GM10248 (cell line): ENCODE measurements at regions of chr5 and their contacts with region 1.

Region 1: DNA sequence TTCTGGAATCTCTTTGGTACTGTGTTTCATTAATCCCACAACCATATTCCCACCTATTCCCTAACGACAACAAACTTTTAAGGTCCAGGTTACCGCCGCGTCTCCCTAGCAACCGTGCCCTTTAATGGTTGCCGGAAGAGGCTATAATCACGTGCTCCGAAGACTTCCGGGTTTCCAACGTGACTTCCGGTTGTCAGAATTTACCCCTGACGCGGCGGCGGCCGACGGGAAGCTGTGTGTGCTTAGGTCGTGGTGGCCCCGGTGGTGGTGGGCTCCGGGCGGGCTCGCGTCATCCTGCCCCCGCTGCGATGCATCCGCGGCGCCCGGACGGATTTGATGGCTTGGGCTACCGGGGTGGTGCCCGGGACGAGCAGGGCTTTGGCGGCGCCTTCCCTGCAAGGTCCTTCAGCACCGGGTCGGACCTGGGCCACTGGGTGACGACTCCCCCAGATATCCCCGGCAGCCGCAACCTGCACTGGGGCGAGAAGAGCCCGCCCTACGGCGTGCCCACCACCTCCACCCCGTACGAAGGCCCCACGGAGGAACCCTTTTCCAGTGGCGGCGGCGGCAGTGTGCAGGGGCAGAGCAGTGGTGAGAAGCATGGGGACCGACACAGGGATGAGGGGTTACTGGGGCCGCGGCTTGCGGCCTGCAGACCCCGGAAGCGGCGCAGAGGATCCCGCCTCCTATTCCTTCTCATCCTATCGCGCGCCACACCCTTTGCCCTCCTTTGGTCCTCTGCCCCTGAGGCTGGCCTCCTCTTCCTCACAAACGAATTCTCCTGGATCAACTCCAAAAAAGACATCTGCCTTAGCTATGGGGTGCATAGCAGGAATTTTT is at the start of gene SLC25A46:
- DNase-seq: peak; percentile 87
- CTCF ChIP-seq: no peak

Region 2: DNA sequence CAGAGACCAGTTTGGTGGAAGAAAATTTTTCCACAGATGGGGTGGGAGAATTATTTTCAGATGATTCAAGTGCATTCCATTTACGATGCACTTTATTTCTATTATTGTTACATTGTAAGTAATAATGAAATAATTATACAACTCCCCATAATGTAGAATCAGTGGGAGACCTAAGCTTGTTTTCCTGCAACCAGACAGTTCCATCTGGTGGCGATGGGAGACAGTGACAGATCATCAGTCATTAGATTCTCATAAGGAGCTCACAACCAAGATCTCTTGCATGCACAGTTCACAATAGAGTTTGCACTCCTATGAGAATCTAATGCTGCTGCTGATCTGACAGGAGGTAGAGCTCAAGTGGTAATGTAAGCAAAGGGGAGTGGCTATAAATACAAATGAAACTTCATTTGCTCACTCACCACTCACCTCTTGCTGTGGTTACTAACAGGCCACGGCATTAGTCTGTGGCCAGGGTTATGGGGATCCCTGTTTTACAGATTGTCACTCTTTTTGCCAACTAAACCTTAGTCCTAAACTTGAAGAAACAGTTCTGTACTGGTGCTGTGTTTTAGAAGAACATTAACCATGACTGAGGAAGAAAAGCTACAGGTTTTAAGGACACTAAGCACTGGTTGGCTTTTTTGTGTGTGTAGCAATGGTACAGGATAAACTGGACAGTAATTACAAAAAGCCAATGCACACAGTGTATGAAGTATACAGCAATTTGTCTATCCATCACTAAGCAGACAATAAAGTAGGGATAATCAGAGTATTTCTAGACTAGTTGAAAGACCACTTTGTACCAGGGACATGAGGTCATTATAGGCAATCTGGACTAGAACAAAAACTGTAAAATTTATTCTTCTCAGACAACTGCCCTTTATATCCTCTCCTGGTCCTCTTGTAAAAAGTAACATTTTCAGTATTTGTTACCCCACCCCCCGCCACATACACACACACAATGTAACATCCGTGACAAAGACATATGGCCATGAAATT is 22.5 kb before region 1 on chr5:
- CTCF ChIA-PET with region 1: no interaction called
- POLR2A ChIA-PET with region 1: no interaction called
- DNase-seq: no peak
- CTCF ChIP-seq: peak; percentile 29

Region 3: DNA sequence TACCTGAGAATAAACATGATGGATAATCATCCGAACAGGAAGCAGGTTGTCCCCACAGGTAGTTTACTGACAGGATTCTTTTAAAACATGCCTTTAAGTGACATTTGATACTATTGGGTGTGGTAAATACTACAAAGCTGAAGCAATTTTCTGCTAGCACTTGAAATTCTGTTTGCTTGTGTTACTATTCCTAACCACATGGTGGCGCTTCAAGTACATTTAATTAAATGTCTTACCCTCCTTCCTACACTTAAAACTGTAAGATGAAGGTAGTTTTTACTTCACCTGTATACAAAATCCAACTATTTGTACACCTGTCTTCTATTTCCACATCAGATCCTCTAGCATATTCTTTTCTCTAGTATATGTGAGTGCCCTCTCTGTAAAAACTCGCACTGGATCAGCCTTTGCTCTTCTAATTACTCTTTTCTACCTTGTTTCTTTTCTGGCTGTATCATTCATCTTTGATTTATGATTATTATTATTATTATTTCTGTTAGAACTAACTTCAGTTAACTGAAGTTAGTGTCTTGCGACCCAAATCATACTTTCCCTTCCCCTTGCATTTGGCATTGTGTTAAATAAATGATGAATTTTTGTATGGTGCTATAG is 18.2 kb after region 1 on chr5:
- CTCF ChIA-PET with region 1: interaction called, 27 read pairs
- POLR2A ChIA-PET with region 1: interaction called, 3 read pairs
- DNase-seq: no peak
- CTCF ChIP-seq: peak; percentile 62